Heart right ventricle (tissue), 16 donors: ENCODE measurements at regions of chr1 and their contacts with region 1.

Region 1: DNA sequence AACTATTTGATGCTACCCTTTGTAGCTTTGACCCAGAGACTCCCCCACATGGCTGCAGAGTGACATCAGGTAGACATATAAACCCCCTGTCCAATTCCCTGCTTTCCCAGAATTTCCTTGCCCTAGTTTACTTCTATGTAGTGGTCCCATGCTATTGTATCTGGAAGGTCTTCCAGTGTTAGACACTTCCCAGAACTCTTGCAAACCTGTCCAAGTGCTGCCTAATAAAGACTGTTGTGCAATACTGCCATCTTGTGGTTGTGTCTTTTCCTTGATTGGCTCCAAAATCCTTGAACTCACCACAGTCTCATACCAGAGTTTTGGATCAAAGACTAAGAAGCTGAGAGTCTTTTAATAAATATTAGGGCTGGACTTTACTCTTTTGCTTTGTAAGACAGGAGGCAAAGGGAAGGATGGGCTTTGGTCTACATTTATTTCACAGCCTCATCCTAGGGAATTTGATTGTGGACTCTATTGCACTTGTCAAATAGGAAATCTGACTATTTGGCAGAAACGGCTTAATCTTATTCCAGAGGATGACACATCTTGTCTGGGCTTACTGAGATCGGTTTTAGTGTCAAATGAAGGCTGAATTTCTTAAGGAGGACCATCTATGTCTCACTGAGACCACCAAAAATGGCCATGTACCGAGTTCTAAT is 169.9 kb downstream of the LRRC7 start:
- DNase-seq: peak in 1 of 2 donors; percentile 15
- ATAC-seq: peak in 7 of 8 donors; percentile 52 to 80 (median 64)
- H3K4me3 ChIP-seq: no peak overlapping the region
- H3K27ac ChIP-seq: no peak overlapping the region
- H3K4me1 ChIP-seq: no peaks in the 10 kb centered on the region
- H3K27me3 ChIP-seq: no peaks in the 10 kb centered on the region
- CTCF ChIP-seq: peak; percentile 36 to 71 (median 62)

Region 2: DNA sequence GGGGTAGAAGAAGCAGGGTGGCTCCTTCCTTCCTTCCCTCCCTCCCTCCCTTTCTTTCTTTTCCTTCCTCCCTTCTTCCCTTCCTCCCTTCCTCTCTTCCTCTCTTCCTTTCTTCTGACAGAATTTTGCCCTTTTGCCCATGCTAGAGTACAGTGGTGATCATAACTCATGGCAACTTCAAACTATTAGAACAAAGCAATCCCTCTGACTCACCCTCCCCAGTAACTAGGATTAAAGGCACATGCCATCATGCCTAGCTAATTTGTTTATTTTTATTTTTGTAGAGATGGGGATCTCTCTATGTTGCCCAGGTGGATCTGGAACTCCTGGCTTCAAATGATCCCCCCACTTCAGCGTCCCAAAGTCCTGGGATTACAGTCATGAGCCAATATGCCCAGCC is 1277.9 kb before region 1 on chr1:
- intact Hi-C with region 1: loop called in 1 of 10 experiments (anchors 10 kb)
- DNase-seq: no peak
- ATAC-seq: no peak
- H3K4me3 ChIP-seq: no peak overlapping the region
- H3K27ac ChIP-seq: no peak overlapping the region
- H3K4me1 ChIP-seq: no peaks in the 10 kb centered on the region
- H3K27me3 ChIP-seq: peaks cover 0 to under 1% (median 0%) of the 10 kb centered on the region in 7 donors
- CTCF ChIP-seq: no peak

Region 3: DNA sequence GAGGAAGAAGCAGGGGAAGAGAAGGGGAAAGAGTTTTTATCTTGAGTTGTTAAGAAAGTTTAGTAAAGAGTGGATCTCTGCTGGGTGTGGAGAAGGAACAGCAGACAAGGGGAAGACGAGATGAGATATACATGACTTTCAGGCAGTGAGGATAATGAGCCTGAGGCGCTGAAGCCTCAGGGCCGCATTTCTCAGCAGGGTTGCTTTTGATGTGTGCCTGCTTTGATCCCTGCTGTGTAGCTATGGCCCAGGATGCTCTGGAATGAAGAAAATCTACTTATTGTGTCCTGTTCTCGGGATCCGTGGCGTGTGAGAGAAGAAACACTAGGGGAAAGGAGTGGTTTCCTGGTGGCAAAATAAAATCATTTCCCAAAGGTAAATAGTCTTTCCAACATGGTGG is 1272.8 kb before region 1 on chr1:
- intact Hi-C with region 1: loop called in 5 of 10 experiments (anchors 5 to 10 kb)
- DNase-seq: no peak
- ATAC-seq: no peak
- H3K4me3 ChIP-seq: no peak overlapping the region
- H3K27ac ChIP-seq: no peak overlapping the region
- H3K4me1 ChIP-seq: no peaks in the 10 kb centered on the region
- H3K27me3 ChIP-seq: peaks cover 0 to 5% (median 0%) of the 10 kb centered on the region in 7 donors
- CTCF ChIP-seq: no peak

Region 4: GRCh38 chr1:68470388-68470970 is 1267.2 kb before region 1 on chr1:
- intact Hi-C with region 1: loop called in 5 of 10 experiments (anchors 5 to 10 kb)
- DNase-seq: no peak
- ATAC-seq: no peak
- H3K4me3 ChIP-seq: no peak overlapping the region
- H3K27ac ChIP-seq: no peak overlapping the region
- H3K4me1 ChIP-seq: no peaks in the 10 kb centered on the region
- H3K27me3 ChIP-seq: no peaks in the 10 kb centered on the region
- CTCF ChIP-seq: peak; percentile 24 to 77 (median 59)

Region 5: GRCh38 chr1:68571454-68572235 is 1166.0 kb before region 1 on chr1:
- intact Hi-C with region 1: loop called in 1 of 10 experiments (anchors 10 kb)
- DNase-seq: no peak
- ATAC-seq: no peak
- H3K4me3 ChIP-seq: no peak overlapping the region
- H3K27ac ChIP-seq: no peak overlapping the region
- H3K4me1 ChIP-seq: peaks cover 0 to 12% (median 0%) of the 10 kb centered on the region in 9 donors
- H3K27me3 ChIP-seq: peaks cover 0 to 13% (median 0%) of the 10 kb centered on the region in 7 donors
- CTCF ChIP-seq: no peak

Region 6: DNA sequence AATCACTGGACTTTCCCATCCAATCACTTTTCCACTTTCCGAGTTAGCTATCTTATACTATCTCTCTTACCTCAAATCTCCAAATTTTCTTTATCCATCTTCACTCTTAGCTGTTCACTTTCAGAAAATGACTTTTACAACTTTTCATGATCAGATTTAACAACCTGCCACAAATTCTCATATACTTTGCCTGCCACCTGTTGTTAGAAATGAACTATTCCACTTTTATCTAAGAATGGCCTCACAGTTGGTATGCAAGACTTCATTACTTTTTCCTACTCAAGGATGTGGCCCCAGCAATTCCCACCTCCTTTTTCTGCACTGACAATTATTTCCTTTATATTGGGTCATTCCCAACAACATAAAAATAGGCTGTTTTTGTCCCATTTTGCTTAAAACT is 1147.2 kb before region 1 on chr1:
- intact Hi-C with region 1: loop called in 2 of 10 experiments (anchors 10 kb)
- DNase-seq: no peak
- ATAC-seq: no peak
- H3K4me3 ChIP-seq: no peak overlapping the region
- H3K27ac ChIP-seq: no peak overlapping the region
- H3K4me1 ChIP-seq: no peaks in the 10 kb centered on the region
- H3K27me3 ChIP-seq: no peaks in the 10 kb centered on the region
- CTCF ChIP-seq: peak in 1 of 9 donors; percentile 22

Region 7: GRCh38 chr1:69535490-69535889 is 202.2 kb before region 1 on chr1:
- intact Hi-C with region 1: no loop called
- DNase-seq: no peak
- ATAC-seq: no peak
- H3K4me3 ChIP-seq: no peak overlapping the region
- H3K27ac ChIP-seq: no peak overlapping the region
- H3K4me1 ChIP-seq: no peaks in the 10 kb centered on the region
- H3K27me3 ChIP-seq: no peaks in the 10 kb centered on the region
- CTCF ChIP-seq: no peak

Region 8: GRCh38 chr1:69639159-69639558 is 98.5 kb before region 1 on chr1:
- intact Hi-C with region 1: no loop called
- DNase-seq: no peak
- ATAC-seq: no peak
- H3K4me3 ChIP-seq: no peak overlapping the region
- H3K27ac ChIP-seq: no peak overlapping the region
- H3K4me1 ChIP-seq: no peaks in the 10 kb centered on the region
- H3K27me3 ChIP-seq: no peaks in the 10 kb centered on the region
- CTCF ChIP-seq: no peak

Region 9: DNA sequence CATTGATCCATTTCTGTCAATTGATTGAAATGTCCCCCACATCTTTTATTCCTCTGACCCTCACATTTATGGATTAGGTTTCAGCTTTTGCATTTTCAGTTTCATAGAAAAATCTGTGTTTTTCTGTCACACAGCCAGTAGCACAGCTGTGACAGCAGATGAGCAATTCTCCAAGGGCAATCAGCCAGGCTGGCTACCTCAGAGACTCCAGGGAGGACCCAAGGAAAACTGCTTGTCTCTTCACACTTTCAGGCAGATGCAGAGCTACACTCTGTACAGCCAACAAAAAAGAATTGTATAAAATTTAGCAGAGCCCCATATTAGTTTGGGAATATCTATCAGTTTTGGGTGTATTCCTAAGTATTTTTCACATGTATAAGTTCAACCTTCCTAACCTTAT is 87.3 kb after region 1 on chr1:
- intact Hi-C with region 1: no loop called
- DNase-seq: peak in 1 of 2 donors; percentile 7
- ATAC-seq: peak in 1 of 8 donors; percentile 58
- H3K4me3 ChIP-seq: no peak overlapping the region
- H3K27ac ChIP-seq: no peak overlapping the region
- H3K4me1 ChIP-seq: no peaks in the 10 kb centered on the region
- H3K27me3 ChIP-seq: no peaks in the 10 kb centered on the region
- CTCF ChIP-seq: no peak